ENCODE measurements at regions of chr4 and their contacts with region 1.

Region 1: DNA sequence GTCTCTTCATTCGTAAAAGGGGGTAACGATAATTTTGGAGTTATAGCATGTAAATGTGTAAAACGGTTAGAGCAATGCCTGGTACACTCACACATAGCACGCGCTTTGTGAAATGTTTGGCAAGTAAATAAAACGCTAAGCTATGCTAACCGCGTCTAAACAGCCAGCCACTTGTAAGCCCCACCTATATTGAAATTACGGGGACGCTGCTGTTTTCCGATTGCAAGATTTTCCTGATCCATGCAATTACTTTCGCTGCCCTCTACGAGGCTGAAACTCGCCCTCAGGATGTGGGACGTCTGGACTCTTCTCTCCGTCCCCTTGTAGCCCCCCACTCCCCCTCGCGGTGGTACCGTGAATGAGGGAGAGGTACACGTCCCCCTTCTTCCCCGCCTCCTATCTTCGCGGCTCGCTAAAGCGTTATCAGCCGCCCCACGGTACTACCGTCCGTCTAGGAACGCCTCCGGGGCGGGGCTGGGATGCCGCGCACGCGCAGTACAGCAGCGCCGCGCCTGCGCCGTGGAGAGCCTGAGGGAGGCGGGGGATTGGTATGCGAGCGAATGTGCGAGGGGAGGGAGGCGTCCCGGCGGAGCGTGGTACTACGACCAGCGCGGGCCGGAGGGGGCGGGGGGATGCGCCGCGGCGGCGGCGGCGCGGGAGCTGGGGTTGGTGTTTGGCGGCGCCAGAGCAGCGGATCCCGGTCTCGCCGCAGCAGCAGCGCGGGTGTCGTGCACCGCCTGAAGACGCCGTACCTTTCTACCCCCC is at the start of gene STIM2:
- DNase-seq: peak; percentile 88 to 98
- H3K4me3 ChIP-seq: peak within 1 kb of the TSS; percentile 95 to 100
- H3K27ac ChIP-seq: peak within 1 kb of the TSS; percentile 92 to 98
- H3K4me1 ChIP-seq: peaks cover 7 to 20% of the 10 kb centered on the region in 2 donors
- H3K27me3 ChIP-seq: no peaks in the 10 kb centered on the region
- CTCF ChIP-seq: peak in 2 of 3 experiments; percentile 27 to 35
- total RNA-seq, gene STIM2: 17.2 TPM

Region 2: DNA sequence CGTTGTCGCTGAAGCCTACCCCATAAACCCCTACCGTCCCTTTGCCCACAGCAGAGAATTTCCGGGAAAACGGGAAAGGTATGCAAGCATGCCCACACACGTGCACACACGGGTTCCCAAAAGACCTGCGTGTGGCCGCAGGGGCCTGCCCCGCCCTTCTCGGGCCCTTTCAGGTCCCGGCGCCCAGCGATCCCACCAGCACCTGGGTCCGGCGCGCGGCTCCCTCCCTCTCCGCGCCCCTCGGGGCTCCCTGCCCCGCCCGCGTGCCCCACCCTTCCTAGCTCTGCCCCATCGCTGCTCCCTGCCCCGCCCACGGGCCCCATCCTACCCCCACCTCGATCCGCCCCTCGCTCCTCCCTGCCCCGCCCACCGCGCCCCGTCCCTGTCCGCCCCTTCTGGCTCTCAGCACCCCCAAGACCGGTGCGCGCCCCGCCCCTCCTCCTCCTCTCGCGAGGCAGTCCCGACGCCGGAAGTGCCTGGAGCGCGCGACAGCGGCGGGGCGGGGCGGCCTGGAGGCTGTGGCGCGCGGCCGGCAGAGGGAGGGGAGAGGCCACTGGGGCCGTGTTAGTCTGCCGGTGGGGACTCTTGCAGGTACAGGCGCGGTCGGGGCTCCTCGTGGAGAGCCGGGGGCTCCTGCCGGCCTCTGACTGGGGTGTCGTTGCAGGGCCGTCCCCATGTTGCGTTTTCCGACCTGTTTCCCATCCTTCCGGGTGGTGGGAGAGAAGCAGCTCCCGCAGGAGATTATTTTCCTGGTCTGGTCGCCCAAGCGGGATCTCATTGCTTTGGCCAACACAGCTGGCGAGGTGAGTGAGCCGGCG is 1483.4 kb before region 1 on chr4 and contains the start of gene ANAPC4:
- intact Hi-C with region 1: loop called (anchors 5 kb)
- DNase-seq: peak; percentile 83 to 95
- H3K4me3 ChIP-seq: peak within 1 kb of the TSS; percentile 79 to 94
- H3K27ac ChIP-seq: peak within 1 kb of the TSS; percentile 71 to 85
- H3K4me1 ChIP-seq: peaks cover 0 to 3% of the 10 kb centered on the region in 2 donors
- H3K27me3 ChIP-seq: no peaks in the 10 kb centered on the region
- CTCF ChIP-seq: peak in 1 of 3 experiments; percentile 3
- total RNA-seq, gene ANAPC4: 23.4 TPM

Region 3: GRCh38 chr4:26015133-26015651 is 845.1 kb before region 1 on chr4:
- intact Hi-C with region 1: loop called (anchors 5 kb)
- DNase-seq: peak; percentile 63 to 96
- H3K4me3 ChIP-seq: no peak overlapping the region
- H3K27ac ChIP-seq: peak overlapping the region; percentile 21 to 46
- H3K4me1 ChIP-seq: peaks cover 4 to 25% of the 10 kb centered on the region in 2 donors
- H3K27me3 ChIP-seq: no peaks in the 10 kb centered on the region
- CTCF ChIP-seq: no peak

Region 4: DNA sequence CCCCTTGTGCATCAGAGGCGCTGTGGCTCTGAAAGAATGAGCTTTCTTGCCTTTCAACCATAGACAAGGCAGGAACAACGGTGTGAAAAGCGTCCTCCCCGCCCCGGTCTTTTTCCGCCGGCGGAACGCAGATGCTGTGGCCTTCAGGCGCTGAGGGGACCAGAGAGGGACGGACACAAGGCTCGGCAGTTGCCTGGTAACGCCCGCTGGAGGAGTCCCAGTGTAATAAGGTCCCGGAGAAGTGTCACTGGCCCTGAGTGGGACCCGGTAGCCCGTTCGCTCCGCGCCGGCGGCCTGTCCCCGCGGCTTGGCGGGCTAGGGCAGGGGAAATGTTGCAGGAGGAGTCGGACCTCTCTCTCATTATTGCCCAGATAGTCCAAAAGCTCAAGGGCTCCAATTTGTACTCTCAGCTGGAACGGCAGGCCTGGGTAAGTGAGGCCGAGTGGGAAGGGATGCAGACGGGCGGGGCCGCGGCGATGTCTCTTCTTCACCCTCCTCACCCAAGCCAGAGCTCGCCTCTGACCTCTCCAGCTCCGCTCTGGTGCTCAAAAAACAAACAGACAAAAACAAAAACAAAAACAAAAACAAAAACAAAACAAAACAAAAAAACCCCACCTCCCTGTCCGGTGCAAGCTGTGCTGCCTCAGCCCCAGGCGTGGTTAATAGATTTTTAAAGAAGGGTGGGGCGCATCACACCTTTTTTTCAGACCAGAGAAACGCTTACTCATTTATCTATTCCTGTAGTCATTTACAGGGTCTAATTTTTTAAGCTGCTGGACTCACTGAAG is 276.3 kb before region 1 on chr4 and contains the start of gene TBC1D19:
- intact Hi-C with region 1: loop called (anchors 5 kb)
- DNase-seq: peak; percentile 53 to 91
- H3K4me3 ChIP-seq: peak within 1 kb of the TSS; percentile 73 to 94
- H3K27ac ChIP-seq: peak within 1 kb of the TSS; percentile 60 to 63
- H3K4me1 ChIP-seq: peaks cover 0 to 2% of the 10 kb centered on the region in 2 donors
- H3K27me3 ChIP-seq: no peaks in the 10 kb centered on the region
- CTCF ChIP-seq: no peak
- total RNA-seq, gene TBC1D19: 18.1 TPM

Region 5: GRCh38 chr4:26607776-26608175 is 252.6 kb before region 1 on chr4:
- intact Hi-C with region 1: no loop called
- DNase-seq: no peak
- H3K4me3 ChIP-seq: no peak overlapping the region
- H3K27ac ChIP-seq: no peak overlapping the region
- H3K4me1 ChIP-seq: no peaks in the 10 kb centered on the region
- H3K27me3 ChIP-seq: no peaks in the 10 kb centered on the region
- CTCF ChIP-seq: no peak

Region 6: GRCh38 chr4:27010334-27010940 is 150.1 kb after region 1 on chr4:
- intact Hi-C with region 1: loop called (anchors 2 kb)
- DNase-seq: peak in 1 of 2 donors; percentile 69
- H3K4me3 ChIP-seq: no peak overlapping the region
- H3K27ac ChIP-seq: no peak overlapping the region
- H3K4me1 ChIP-seq: peaks cover 0 to 6% of the 10 kb centered on the region in 2 donors
- H3K27me3 ChIP-seq: no peaks in the 10 kb centered on the region
- CTCF ChIP-seq: peak; percentile 62 to 94 (median 92)